Natural killer cell (primary cell): ENCODE measurements at regions of chr11 and their contacts with region 1.

Region 1: DNA sequence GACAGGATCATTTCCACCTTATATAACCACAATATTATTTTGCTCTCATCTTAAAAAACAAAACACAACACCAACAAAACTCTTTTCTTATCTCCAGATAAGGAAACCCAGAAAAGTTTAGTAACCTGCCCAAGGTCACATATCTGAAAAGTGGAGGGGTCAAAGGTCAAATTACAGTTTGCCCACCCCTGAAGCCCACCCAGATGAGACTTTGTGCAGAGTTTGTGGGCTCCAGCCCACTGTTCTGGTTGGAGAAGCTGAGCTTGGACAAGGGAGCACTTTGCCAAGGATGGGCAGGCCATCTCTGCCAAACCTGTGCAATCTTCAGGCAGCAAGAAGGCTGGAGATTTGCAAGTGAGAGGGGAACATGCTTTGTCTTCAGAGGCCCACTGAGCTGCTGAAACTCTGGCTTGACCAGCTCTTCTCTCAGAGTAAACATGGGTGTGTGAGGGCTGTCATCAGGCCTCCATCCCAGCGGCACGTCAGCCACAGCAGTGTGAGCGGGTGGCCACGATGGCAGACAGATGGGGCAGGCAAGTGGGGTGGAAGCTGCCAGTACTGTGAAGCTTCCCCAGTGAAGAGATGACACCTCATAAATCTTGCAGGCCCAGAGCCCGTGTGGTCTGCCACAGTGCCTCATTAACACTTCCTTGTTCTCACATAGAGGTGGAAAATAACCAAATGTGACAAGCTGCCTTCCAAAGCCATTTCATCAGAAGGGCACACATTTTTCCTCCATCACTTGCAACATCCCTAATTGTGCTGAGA is 111.8 kb downstream of the CCDC81 start:
- DNase-seq: peak; percentile 66 to 70
- ATAC-seq: peak; percentile 93 to 98 (median 94)
- H3K4me3 ChIP-seq: no peak overlapping the region
- H3K4me3 Mint-ChIP-seq: peak overlapping the region; percentile 82
- H3K27ac ChIP-seq: peak overlapping the region; percentile 74
- H3K27ac Mint-ChIP-seq: peak overlapping the region; percentile 85 to 90
- H3K4me1 ChIP-seq: peaks cover 34% of the 10 kb centered on the region
- H3K4me1 Mint-ChIP-seq: peaks cover 49 to 65% of the 10 kb centered on the region in 2 donors
- H3K27me3 ChIP-seq: no peaks in the 10 kb centered on the region
- H3K27me3 Mint-ChIP-seq: peaks cover 42 to 45% of the 10 kb centered on the region in 2 donors
- CTCF ChIP-seq: no peak

Region 2: DNA sequence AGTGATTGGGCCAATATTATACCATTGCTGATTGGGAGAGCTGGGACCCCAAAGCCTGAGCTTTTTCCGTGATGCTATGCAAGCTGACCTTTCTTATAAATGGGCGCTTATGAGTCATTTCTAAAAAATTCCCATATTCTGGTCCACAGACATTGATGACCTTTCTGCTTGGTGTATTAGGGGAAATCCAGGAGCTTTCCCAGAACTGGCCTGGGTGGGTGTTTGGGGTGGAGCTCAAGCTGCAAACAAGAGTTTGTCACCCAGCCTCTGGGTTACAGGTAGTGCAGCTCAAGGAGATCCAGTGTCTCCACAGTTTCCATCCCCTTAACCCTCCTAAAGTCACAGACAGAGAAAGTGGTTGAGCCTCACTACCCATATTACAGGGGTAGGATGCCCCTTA is 44.0 kb before region 1 on chr11:
- intact Hi-C with region 1: no loop called
- DNase-seq: no peak
- ATAC-seq: no peak
- H3K4me3 ChIP-seq: no peak overlapping the region
- H3K4me3 Mint-ChIP-seq: no peak overlapping the region
- H3K27ac ChIP-seq: no peak overlapping the region
- H3K27ac Mint-ChIP-seq: no peak overlapping the region
- H3K4me1 ChIP-seq: peaks cover 13% of the 10 kb centered on the region
- H3K4me1 Mint-ChIP-seq: peaks cover 12 to 20% of the 10 kb centered on the region in 2 donors
- H3K27me3 ChIP-seq: no peaks in the 10 kb centered on the region
- H3K27me3 Mint-ChIP-seq: no peaks in the 10 kb centered on the region
- CTCF ChIP-seq: no peak

Region 3: DNA sequence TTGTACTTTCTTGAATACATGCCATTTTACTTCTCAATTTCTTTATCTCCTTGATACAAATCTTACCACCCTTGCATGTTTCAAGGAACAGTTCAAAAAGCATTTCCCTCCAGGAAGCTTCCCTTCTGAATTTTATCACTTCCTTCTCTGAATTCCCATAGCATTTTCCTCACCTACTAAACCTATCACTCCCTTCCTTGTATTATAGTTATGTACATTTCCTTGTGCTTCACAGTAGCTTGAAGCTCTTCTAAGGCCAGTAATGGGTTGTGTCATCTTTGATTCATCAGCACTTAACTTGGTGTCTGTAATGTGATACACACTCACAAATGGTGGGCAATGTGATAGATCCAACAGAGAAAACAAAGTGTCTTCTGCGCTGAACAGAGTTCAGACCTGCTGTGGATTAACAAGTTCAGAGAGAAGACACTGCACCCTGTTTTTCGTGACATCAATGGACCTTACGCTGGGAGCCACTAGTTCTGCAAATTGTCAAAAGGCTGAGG is 15.7 kb after region 1 on chr11:
- intact Hi-C with region 1: loop called (anchors 2 kb)
- DNase-seq: no peak
- ATAC-seq: peak in 2 of 3 donors; percentile 24 to 29
- H3K4me3 ChIP-seq: no peak overlapping the region
- H3K4me3 Mint-ChIP-seq: no peak overlapping the region
- H3K27ac ChIP-seq: no peak overlapping the region
- H3K27ac Mint-ChIP-seq: no peak overlapping the region
- H3K4me1 ChIP-seq: peaks cover 52% of the 10 kb centered on the region
- H3K4me1 Mint-ChIP-seq: peaks cover 0 to 5% of the 10 kb centered on the region in 2 donors
- H3K27me3 ChIP-seq: peaks cover 3% of the 10 kb centered on the region
- H3K27me3 Mint-ChIP-seq: peaks cover 13 to 24% of the 10 kb centered on the region in 2 donors
- CTCF ChIP-seq: no peak

Region 4: DNA sequence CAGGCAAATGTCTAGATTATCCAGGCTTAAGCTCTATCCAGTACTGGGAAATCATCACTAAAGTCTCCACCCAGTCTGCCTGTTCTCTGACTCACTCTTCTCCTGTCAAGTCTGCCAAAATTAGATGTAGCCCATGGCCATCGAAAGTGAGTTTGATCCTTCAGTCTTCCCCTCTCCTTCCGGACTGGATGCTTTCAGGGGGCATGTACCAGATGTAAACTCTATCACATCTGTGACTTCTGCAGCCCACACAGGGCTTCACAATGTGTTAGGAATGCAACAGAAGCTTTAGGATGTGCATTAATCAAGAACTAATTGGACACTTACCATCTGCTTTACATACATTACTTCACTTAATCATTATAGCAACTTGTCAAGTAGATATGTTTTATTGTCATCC is 173.6 kb after region 1 on chr11:
- intact Hi-C with region 1: no loop called
- DNase-seq: no peak
- ATAC-seq: no peak
- H3K4me3 ChIP-seq: no peak overlapping the region
- H3K4me3 Mint-ChIP-seq: no peak overlapping the region
- H3K27ac ChIP-seq: no peak overlapping the region
- H3K27ac Mint-ChIP-seq: no peak overlapping the region
- H3K4me1 ChIP-seq: no peaks in the 10 kb centered on the region
- H3K4me1 Mint-ChIP-seq: no peaks in the 10 kb centered on the region
- H3K27me3 ChIP-seq: no peaks in the 10 kb centered on the region
- H3K27me3 Mint-ChIP-seq: peaks cover 0 to 2% of the 10 kb centered on the region in 2 donors
- CTCF ChIP-seq: no peak